Thyroid gland (tissue), 4 donors: ENCODE measurements at regions of chr17 and their contacts with region 1.

Region 1: DNA sequence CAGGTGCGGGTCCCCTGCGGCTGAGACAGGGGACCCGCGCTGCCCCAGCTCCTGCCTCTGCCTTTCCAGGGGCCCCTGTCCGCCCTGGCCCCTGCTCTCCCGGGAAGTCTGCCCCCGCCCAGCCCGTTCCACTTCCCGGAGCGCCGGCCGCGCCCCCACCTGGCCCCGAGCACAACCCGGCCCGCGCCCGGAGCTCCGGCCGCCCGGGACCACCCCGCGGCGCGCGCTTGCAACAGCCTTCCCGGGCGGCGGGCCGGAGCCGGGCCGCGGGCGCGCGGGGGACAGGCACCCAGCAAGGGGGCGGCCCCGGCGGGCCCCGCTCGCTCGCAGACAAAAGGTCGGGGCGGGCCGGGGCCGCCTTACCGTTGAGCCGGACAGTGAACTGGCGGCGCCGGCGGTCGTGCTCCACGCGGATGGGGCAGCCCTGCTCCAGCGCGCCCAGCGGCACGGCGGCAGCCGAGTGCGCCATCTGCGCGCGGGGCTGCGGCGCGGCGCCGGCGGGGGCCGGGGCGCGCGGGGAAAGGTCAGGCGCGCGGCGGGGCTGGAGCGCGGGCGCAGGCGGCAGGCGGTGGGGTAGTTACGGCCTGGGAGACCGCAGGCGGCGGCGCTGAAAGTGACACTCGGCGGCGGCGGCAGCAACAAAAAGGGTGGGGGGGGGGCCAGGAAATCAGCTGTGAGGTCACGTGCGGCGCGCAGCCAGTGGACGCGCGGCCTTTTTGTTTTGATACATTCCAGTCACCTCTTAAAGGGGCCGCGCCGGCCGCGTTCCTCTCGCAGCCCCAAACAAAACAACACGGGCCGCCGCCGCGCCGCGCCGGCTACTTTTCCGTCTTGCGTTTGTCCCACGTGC is at the start of gene NATD1:
- DNase-seq: peak; percentile 93 to 94
- H3K4me3 ChIP-seq: peak within 1 kb of the TSS; percentile 7 to 70 (median 45)
- H3K27ac ChIP-seq: peak within 1 kb of the TSS; percentile 66 to 84 (median 83)
- H3K4me1 ChIP-seq: peaks cover 28 to 49% of the 10 kb centered on the region in 2 donors
- H3K27me3 ChIP-seq: no peaks in the 10 kb centered on the region
- CTCF ChIP-seq: no peak
- POLR2A ChIP-seq: peak; percentile 40 to 82
- total RNA-seq, gene NATD1: 18.6 to 34.1 (median 21.2) TPM

Region 2: DNA sequence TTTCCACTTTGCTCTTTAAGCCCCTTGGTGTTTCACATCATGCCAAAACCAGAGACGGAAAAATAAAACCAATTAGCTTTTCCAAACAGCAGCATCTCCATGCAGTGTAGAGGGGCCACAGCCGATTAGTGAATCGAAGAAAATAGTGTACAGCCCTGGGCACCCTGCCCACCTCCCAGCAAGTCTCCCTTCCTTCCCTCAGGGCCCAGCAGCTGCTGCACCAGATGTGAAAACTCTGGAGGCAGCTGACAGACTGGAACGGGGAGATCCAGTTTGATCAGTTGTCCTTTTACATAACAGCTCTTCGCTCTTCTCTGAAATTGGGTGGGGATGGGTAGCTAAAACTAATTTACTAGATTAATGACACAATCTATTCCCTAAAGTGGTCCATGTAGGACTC is 58.3 kb before region 1 on chr17:
- intact Hi-C with region 1: loop called (anchors 5 kb)
- DNase-seq: peak; percentile 51 to 69
- H3K4me3 ChIP-seq: no peak overlapping the region
- H3K27ac ChIP-seq: peak overlapping the region; percentile 3 to 25 (median 4)
- H3K4me1 ChIP-seq: peaks cover 32% of the 10 kb centered on the region in 2 donors
- H3K27me3 ChIP-seq: no peaks in the 10 kb centered on the region
- CTCF ChIP-seq: no peak
- POLR2A ChIP-seq: no peak